ENCODE measurements at regions of chr3 and their contacts with region 1.

Region 1: GRCh38 chr3:53921296-53921695 is 29.6 kb upstream of the SELENOK start:
- DNase-seq: no peak
- ATAC-seq: no peak
- H3K4me3 Mint-ChIP-seq: no peak overlapping the region
- H3K27ac Mint-ChIP-seq: no peak overlapping the region
- H3K4me1 Mint-ChIP-seq: no peaks in the 10 kb centered on the region
- H3K27me3 Mint-ChIP-seq: peaks cover 19% of the 10 kb centered on the region
- CTCF ChIP-seq: no peak

Region 2: GRCh38 chr3:52623234-52623792 is 1298.0 kb before region 1 on chr3:
- CTCF ChIA-PET with region 1: no interaction called
- POLR2A ChIA-PET with region 1: no interaction called
- intact Hi-C with region 1: no loop called
- DNase-seq: no peak
- ATAC-seq: no peak
- H3K4me3 Mint-ChIP-seq: no peak overlapping the region
- H3K27ac Mint-ChIP-seq: no peak overlapping the region
- H3K4me1 Mint-ChIP-seq: no peaks in the 10 kb centered on the region
- H3K27me3 Mint-ChIP-seq: no peaks in the 10 kb centered on the region
- CTCF ChIP-seq: no peak

Region 3: GRCh38 chr3:53375019-53375418 is 546.3 kb before region 1 on chr3:
- CTCF ChIA-PET with region 1: no interaction called
- POLR2A ChIA-PET with region 1: no interaction called
- intact Hi-C with region 1: loop called (anchors 2 kb)
- DNase-seq: peak; percentile 29
- ATAC-seq: peak; percentile 42
- H3K4me3 Mint-ChIP-seq: no peak overlapping the region
- H3K27ac Mint-ChIP-seq: no peak overlapping the region
- H3K4me1 Mint-ChIP-seq: no peaks in the 10 kb centered on the region
- H3K27me3 Mint-ChIP-seq: peaks cover 25% of the 10 kb centered on the region
- CTCF ChIP-seq: no peak

Measured in activated B cell treated with CpG ODN at 0.5 μM for 24 hours (primary cell).